CD8-positive, alpha-beta T cell (primary cell): ENCODE measurements at regions of chr14 and their contacts with region 1.

Region 1: DNA sequence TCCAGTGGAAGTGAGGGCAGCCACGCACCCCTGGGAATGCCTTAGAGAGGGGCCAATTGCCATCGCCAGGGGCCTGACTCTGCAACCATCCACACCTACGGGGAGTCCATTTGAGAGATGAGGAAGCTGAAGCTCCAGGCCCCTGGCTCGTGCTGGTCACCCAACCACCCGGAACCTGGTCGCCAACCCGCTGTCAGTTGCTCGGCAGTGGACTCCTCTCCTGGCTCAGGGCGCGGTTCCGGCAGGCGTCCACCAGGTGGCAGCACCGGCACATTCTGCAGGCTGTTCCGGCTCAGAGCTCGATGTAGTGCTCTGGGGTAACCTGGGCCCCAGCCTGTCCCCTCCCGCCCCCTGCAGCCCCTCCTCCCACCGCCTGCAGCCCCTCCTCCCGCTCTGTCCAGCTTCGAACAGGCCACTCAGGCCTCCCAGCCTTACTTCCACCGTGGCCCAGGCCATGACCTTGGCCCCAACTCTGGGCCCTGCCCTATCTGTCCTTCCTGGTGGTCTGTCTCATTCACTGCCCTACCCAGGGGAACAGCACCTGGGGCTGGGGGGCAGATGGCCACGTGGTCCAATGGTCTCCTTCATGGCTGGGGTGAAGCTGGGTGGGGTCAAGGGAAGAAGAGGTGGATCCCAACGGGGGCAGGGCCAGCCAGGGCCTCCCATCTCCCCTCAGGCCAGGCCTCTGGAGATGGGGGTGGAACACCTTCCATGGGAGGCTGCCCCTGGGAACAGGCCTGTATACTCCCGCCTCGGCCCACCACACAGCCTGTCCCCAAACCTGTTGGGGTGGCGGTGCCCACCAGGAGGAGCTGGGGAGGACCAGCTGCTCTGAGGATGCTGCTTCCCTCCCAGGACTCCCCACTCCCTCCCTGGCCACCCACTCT is 15.7 kb downstream of the SIVA1 start:
- DNase-seq: peak; percentile 80 to 97 (median 89)
- ATAC-seq: peak; percentile 97
- H3K4me3 ChIP-seq: no peak overlapping the region
- H3K4me3 Mint-ChIP-seq: no peak overlapping the region
- H3K27ac ChIP-seq: no peak overlapping the region
- H3K27ac Mint-ChIP-seq: no peak overlapping the region
- H3K4me1 ChIP-seq: peaks cover 5% of the 10 kb centered on the region
- H3K4me1 Mint-ChIP-seq: peaks cover 4% of the 10 kb centered on the region
- H3K27me3 ChIP-seq: no peaks in the 10 kb centered on the region
- H3K27me3 Mint-ChIP-seq: no peaks in the 10 kb centered on the region
- CTCF ChIP-seq: peak; percentile 89

Region 2: DNA sequence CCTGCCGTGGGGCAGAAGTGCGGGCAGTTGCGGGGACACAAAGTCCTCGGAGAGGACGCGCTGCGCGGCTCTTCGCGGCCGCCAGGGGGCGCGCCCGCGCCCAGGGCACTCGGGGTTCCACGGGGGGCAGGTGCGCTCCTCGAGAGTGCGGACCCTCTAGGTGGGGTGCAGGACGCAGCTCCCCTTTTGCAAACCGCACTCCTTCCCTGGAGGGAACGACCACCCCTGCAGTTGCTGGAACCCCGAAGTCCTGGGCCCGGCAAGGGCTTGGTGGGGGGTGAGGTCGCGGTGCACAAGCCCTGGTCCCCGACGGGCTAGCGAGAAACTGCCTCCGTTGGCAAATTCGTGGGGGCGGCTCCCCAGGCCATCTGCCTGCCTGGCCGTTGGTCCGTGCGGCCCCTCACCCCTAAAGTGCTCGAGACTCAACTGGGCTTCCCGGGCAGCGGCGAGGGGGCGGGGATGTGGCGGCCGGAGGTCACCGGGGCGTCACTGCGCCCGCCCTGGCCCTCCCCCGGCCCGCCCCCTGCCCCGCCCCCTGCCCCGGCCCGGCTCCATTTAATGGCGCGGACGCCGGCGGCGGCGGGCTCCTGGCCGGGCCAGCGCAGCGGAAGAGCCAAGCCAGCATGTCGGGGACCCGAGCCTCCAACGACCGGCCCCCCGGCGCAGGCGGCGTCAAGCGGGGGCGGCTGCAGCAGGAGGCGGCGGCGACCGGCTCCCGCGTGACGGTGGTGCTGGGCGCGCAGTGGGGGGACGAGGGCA is 44.9 kb before region 1 on chr14 and contains the start of gene ADSS1:
- CTCF ChIA-PET with region 1: interaction called, 3 read pairs
- POLR2A ChIA-PET with region 1: no interaction called
- intact Hi-C with region 1: loop called in 1 of 2 experiments (anchors 5 kb)
- DNase-seq: peak; percentile 33 to 77 (median 58)
- ATAC-seq: peak; percentile 79
- H3K4me3 ChIP-seq: peak within 1 kb of the TSS; percentile 72 to 87
- H3K4me3 Mint-ChIP-seq: peak within 1 kb of the TSS; percentile 69
- H3K27ac ChIP-seq: no peak within 1 kb of the TSS
- H3K27ac Mint-ChIP-seq: no peak within 1 kb of the TSS
- H3K4me1 ChIP-seq: peaks cover 6% of the 10 kb centered on the region
- H3K4me1 Mint-ChIP-seq: no peaks in the 10 kb centered on the region
- H3K27me3 ChIP-seq: no peaks in the 10 kb centered on the region
- H3K27me3 Mint-ChIP-seq: no peaks in the 10 kb centered on the region
- CTCF ChIP-seq: peak; percentile 86
- total RNA-seq, gene ADSS1: 2.4 to 3.5 TPM

Region 3: GRCh38 chr14:104820669-104821228 is 52.1 kb after region 1 on chr14:
- CTCF ChIA-PET with region 1: interaction called, 109 read pairs
- POLR2A ChIA-PET with region 1: interaction called, 22 read pairs
- intact Hi-C with region 1: no loop called
- DNase-seq: no peak
- ATAC-seq: no peak
- H3K4me3 ChIP-seq: no peak overlapping the region
- H3K4me3 Mint-ChIP-seq: no peak overlapping the region
- H3K27ac ChIP-seq: no peak overlapping the region
- H3K27ac Mint-ChIP-seq: no peak overlapping the region
- H3K4me1 ChIP-seq: peaks cover 17% of the 10 kb centered on the region
- H3K4me1 Mint-ChIP-seq: peaks cover 21% of the 10 kb centered on the region
- H3K27me3 ChIP-seq: no peaks in the 10 kb centered on the region
- H3K27me3 Mint-ChIP-seq: no peaks in the 10 kb centered on the region
- CTCF ChIP-seq: no peak

Region 4: DNA sequence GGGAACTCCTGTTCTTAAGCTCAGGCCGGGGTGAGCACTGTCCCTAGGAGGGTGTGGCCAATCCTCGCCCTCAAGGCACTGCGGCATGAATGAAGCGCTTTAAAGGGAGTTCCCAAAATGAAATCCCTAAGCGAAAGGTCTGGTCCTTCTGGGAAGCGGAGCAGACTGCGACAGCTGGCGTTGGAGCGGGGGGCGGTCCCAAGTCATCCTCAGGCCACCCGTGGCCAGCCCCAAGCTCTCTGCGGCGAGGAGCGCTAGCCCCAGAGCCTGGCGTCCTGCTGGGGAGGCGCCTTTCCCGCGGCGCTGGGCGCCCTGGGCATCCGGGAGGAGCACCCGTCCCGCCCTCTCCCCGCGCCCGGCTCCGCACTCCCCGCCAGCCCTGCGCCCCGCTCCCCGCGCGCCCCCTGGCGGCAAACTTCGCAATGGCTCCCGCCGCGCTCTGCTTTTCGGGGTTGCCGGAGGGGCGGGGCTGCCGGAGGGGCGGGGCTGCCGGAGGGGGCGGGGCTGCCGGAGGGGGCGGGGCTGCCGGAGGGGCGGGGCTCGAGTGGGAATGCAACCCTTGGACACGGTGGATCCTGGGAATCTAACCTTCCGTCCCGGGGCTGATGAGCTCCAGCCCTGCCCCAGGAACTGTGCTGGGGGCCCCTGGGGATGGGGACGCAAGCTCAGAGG is 57.6 kb after region 1 on chr14:
- CTCF ChIA-PET with region 1: interaction called, 109 read pairs
- POLR2A ChIA-PET with region 1: interaction called, 22 read pairs
- intact Hi-C with region 1: loop called (anchors 1 kb)
- DNase-seq: peak; percentile 88 to 98 (median 95)
- ATAC-seq: peak; percentile 91
- H3K4me3 ChIP-seq: peak overlapping the region; percentile 66 to 67
- H3K4me3 Mint-ChIP-seq: peak overlapping the region; percentile 80
- H3K27ac ChIP-seq: no peak overlapping the region
- H3K27ac Mint-ChIP-seq: no peak overlapping the region
- H3K4me1 ChIP-seq: peaks cover 20% of the 10 kb centered on the region
- H3K4me1 Mint-ChIP-seq: peaks cover 25% of the 10 kb centered on the region
- H3K27me3 ChIP-seq: peaks cover 0 to 5% of the 10 kb centered on the region in 2 experiments
- H3K27me3 Mint-ChIP-seq: no peaks in the 10 kb centered on the region
- CTCF ChIP-seq: peak; percentile 79

Region 5: DNA sequence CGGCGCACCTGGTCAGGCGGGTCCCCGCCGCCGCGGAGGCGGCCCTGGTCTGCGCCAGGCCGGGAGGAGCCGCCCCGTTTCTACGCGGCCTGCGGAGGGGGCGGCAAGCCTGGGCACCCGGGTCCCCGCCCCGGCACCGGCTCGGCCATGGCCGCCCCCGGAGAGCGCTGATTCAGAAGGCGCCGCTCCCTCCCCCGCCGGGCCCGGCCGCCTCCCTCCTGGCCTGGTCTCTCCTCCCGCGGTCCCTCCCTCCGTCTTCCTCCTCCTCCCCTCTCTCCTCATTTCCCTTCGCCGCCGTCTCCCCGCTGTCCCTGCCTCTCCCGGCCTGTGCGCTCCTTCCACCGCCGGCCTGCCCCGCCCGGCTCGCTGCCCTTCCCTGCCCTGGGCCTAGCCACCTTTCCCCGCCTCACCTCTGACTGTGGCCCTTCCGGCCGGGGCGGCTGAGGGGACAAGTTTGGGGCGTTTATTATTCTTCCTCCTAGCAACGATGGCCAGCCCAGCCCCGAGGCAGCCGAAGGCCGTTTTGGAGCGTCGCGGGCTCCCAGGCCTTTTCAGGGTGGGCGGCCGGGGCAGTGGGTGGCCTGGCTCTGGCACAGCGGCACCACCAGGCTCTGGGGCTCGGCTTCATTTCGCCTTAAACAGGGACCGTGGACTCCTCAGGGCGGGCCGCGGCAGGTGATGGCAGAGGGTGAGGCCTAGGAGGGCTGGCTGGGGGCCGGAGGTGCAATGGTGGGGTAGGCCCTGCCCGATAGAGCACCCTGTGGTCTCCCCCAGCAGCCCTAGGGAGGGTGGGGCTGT is 97.2 kb after region 1 on chr14:
- CTCF ChIA-PET with region 1: interaction called, 3 read pairs
- POLR2A ChIA-PET with region 1: no interaction called
- intact Hi-C with region 1: loop called (anchors 1 kb)
- DNase-seq: peak in 3 of 9 experiments; percentile 28 to 37 (median 36)
- ATAC-seq: peak; percentile 47
- H3K4me3 ChIP-seq: peak overlapping the region; percentile 28 to 35
- H3K4me3 Mint-ChIP-seq: peak overlapping the region; percentile 65
- H3K27ac ChIP-seq: no peak overlapping the region
- H3K27ac Mint-ChIP-seq: no peak overlapping the region
- H3K4me1 ChIP-seq: peaks cover 16% of the 10 kb centered on the region
- H3K4me1 Mint-ChIP-seq: peaks cover 4% of the 10 kb centered on the region
- H3K27me3 ChIP-seq: peaks cover 8 to 21% of the 10 kb centered on the region in 2 experiments
- H3K27me3 Mint-ChIP-seq: peaks cover 13% of the 10 kb centered on the region
- CTCF ChIP-seq: no peak

Region 6: GRCh38 chr14:104932676-104933631 is 164.3 kb after region 1 on chr14:
- CTCF ChIA-PET with region 1: no interaction called
- POLR2A ChIA-PET with region 1: no interaction called
- intact Hi-C with region 1: no loop called
- DNase-seq: peak; percentile 68 to 91 (median 81)
- ATAC-seq: peak; percentile 96
- H3K4me3 ChIP-seq: peak overlapping the region; percentile 39 to 53
- H3K4me3 Mint-ChIP-seq: peak overlapping the region; percentile 61
- H3K27ac ChIP-seq: no peak overlapping the region
- H3K27ac Mint-ChIP-seq: no peak overlapping the region
- H3K4me1 ChIP-seq: no peaks in the 10 kb centered on the region
- H3K4me1 Mint-ChIP-seq: peaks cover 6% of the 10 kb centered on the region
- H3K27me3 ChIP-seq: no peaks in the 10 kb centered on the region
- H3K27me3 Mint-ChIP-seq: peaks cover 11% of the 10 kb centered on the region
- CTCF ChIP-seq: peak; percentile 54